ENCODE measurements at regions of chr1 and their contacts with region 1.

Region 1: DNA sequence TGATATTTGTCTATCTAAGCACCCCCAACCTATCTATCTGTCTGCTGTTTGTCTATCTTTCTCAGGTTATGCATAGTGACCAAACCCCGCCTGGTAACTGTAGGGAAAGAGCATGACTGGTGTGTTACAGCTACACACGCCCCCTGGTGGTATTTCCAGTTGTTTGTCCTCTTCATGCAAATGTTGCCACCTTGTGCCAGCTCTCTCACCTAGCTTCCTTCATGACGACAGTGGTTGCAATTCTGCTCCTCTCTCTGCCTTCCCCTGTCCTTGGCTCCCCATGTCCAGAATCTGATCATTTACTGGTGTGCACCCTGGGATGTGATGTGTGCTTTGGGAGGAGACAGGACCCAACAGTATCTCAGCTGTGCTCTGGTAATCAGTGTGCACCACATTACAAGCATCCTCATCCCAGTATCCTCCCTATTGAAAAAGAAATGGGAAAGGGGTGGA is 8.1 kb upstream of the INKA2 start:
- DNase-seq: peak; percentile 81
- ATAC-seq: peak; percentile 89
- H3K4me3 ChIP-seq: no peak overlapping the region
- H3K27ac ChIP-seq: no peak overlapping the region
- H3K4me1 ChIP-seq: peaks cover 38% of the 10 kb centered on the region
- H3K27me3 ChIP-seq: no peaks in the 10 kb centered on the region
- CTCF ChIP-seq: peak; percentile 94
- EP300 ChIP-seq: no peak
- POLR2A ChIP-seq: no peak
- RAD21 ChIP-seq: peak; percentile 90

Region 2: DNA sequence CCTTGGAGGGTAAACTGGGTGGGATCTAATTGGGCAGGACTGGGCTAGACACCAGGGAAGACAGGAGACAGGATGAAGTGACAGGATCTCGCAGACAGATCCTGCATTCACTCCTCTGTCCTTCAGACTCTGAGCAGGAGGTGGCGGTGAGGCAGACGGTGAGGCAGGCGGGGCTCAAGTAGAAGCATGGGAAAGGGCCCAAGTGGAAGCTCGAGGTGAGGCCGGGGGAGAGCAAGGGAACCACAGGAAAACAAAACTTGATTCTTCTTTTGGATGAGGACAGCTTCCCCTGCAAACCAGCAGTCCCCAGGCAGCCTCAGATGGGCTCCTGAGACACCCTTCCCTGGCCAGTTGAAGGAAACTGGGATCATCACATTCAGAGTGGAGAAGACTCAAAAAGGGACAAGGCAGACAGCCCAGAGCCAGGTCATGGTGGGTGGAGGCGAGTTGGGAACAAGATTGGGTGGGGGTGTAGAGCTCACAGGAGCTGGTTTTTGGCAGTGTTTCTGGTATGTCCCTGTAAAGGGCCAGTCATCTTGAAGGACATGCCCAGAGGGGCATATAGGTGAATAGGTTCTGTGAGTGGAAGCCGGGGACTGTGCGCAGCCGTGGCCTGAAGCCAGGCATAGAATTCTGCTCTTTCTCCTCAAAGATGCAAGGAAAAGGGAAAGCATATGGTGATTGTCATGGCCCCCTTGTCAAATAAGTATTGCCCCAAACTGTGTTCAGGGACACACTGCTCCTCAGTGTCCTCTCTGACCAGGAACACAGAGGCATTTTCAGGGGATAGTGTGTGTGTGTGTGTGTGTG is 26.1 kb before region 1 on chr1:
- CTCF ChIA-PET with region 1: interaction called, 65 read pairs
- POLR2A ChIA-PET with region 1: no interaction called
- in situ Hi-C with region 1: no loop called
- intact Hi-C with region 1: no loop called
- DNase-seq: no peak
- ATAC-seq: peak; percentile 31
- H3K4me3 ChIP-seq: no peak overlapping the region
- H3K27ac ChIP-seq: no peak overlapping the region
- H3K4me1 ChIP-seq: peaks cover 59% of the 10 kb centered on the region
- H3K27me3 ChIP-seq: no peaks in the 10 kb centered on the region
- CTCF ChIP-seq: no peak
- EP300 ChIP-seq: no peak
- POLR2A ChIP-seq: no peak
- RAD21 ChIP-seq: no peak

Region 3: DNA sequence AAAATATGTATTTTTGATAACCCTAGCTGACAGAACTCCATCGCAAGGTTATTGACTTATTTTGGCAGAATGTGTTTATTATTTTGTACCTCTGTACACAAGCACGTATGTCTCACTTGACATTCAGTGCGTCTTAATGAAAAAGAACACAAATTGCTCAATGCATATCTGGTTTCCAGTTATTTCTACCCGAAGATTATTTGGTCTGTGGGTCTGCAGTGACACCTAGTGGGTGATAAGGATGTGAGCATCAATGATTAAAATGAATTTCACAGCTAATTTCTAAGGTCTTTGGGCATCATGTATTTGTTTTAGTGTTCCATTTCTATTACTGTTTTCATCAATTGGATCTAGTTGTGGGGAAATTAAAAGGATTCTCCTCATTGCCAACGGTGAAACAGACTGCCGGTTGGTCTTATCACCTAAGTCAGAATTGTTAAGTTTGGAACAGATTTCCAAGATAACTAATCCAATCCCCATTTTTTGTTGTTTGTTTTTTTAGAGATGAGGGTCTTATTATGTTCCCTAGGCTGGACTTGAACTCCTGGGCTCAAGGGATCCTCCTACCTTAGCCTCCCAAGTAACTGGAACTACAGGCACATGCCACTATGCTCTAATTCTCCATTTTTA is 22.3 kb after region 1 on chr1:
- CTCF ChIA-PET with region 1: interaction called, 6 read pairs
- POLR2A ChIA-PET with region 1: no interaction called
- in situ Hi-C with region 1: no loop called
- intact Hi-C with region 1: loop called (anchors 1 kb)
- DNase-seq: peak; percentile 65
- ATAC-seq: no peak
- H3K4me3 ChIP-seq: no peak overlapping the region
- H3K27ac ChIP-seq: no peak overlapping the region
- H3K4me1 ChIP-seq: peaks cover 12% of the 10 kb centered on the region; the same call in 1 of the 2 replicates
- H3K27me3 ChIP-seq: no peaks in the 10 kb centered on the region
- CTCF ChIP-seq: peak; percentile 78
- EP300 ChIP-seq: no peak
- POLR2A ChIP-seq: no peak
- RAD21 ChIP-seq: peak; percentile 47; the same call in 1 of the 2 replicates

Region 4: DNA sequence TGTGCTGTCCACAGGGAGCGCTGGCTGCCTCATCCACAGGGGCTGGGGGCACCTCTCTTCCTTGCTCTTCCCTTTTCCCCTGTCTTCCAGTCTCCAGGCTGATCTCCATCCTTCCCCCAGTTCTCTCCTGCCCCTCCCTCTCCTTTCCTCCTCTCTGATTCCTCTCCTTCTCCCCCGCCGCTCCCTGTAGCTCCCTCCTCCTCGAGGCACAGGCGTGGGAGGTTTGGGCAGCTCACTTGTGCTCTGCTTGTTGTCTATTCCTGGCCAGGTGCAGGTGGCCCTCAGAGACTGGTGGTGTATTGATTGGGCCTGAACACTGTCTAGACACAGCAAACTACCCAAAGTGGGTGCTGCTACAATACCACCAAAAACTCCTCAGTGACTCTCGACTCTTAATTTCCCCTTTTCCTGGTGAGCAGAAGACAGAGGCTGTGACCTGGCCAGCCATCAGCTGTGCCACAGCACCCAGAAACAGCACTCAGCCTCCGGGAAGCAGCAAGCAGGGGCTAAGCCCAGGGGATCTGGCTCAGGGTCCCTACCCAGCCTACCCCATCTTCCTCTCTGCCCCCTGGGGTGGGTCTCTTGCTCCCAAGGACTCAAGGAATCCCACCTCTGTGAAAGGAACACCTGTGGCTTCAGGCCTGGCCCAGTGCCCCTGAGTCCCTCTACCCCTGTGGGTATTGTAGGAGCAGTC is 101.7 kb after region 1 on chr1:
- CTCF ChIA-PET with region 1: no interaction called
- POLR2A ChIA-PET with region 1: no interaction called
- in situ Hi-C with region 1: no loop called
- intact Hi-C with region 1: no loop called
- DNase-seq: no peak
- ATAC-seq: no peak
- H3K4me3 ChIP-seq: no peak overlapping the region
- H3K27ac ChIP-seq: no peak overlapping the region
- H3K4me1 ChIP-seq: no peaks in the 10 kb centered on the region
- H3K27me3 ChIP-seq: peaks cover 5 to 23% of the 10 kb centered on the region in 2 experiments; a peak in 4 of 5 replicates
- CTCF ChIP-seq: no peak
- EP300 ChIP-seq: no peak
- POLR2A ChIP-seq: no peak
- RAD21 ChIP-seq: no peak